ENCODE measurements at regions of chr16 and their contacts with region 1.

Region 1: GRCh38 chr16:71311553-71312158 is 22.5 kb upstream of the CMTR2 start:
- DNase-seq: peak; percentile 39
- ATAC-seq: no peak
- H3K4me3 Mint-ChIP-seq: no peak overlapping the region
- H3K27ac Mint-ChIP-seq: no peak overlapping the region
- H3K4me1 Mint-ChIP-seq: no peaks in the 10 kb centered on the region
- H3K27me3 Mint-ChIP-seq: peaks cover 16% of the 10 kb centered on the region

Region 2: GRCh38 chr16:71288890-71289733 is 22.5 kb before region 1 on chr16 and contains the start of gene CMTR2:
- CTCF ChIA-PET with region 1: interaction called, 21 read pairs
- POLR2A ChIA-PET with region 1: no interaction called
- DNase-seq: peak; percentile 93
- ATAC-seq: peak; percentile 97
- H3K4me3 Mint-ChIP-seq: peak within 1 kb of the TSS; percentile 83
- H3K27ac Mint-ChIP-seq: peak within 1 kb of the TSS; percentile 89
- H3K4me1 Mint-ChIP-seq: peaks cover 18% of the 10 kb centered on the region
- H3K27me3 Mint-ChIP-seq: peaks cover 5% of the 10 kb centered on the region
- total RNA-seq, gene CMTR2: 15.8 to 18.5 TPM

Measured in activated CD8-positive, alpha-beta T cell treated with anti-CD3 and anti-CD28 coated beads, Interleukin-2, amount 10 ng/mL, durations not matched to agents 7 days and 5 days (primary cell).